Activated T-helper 2 cell treated with anti-CD3 and anti-CD28 coated beads, Interferon-gamma antibody, Interleukin-2, Interleukin-4, amounts not matched to agents 10 μg/mL and 5 μg/mL and 100 μg/mL, durations not matched to agents 14 hours and 24 hours and 36 hours (primary cell): ENCODE measurements at regions of chr19 and their contacts with region 1.

Region 1: GRCh38 chr19:54209811-54210494 is 9.3 kb downstream of the RPS9 start:
- DNase-seq: no peak
- H3K4me3 Mint-ChIP-seq: peak overlapping the region; percentile 30
- H3K27ac Mint-ChIP-seq: peak overlapping the region; percentile 71
- H3K4me1 Mint-ChIP-seq: peaks cover 59% of the 10 kb centered on the region
- H3K27me3 Mint-ChIP-seq: no peaks in the 10 kb centered on the region

Region 2: DNA sequence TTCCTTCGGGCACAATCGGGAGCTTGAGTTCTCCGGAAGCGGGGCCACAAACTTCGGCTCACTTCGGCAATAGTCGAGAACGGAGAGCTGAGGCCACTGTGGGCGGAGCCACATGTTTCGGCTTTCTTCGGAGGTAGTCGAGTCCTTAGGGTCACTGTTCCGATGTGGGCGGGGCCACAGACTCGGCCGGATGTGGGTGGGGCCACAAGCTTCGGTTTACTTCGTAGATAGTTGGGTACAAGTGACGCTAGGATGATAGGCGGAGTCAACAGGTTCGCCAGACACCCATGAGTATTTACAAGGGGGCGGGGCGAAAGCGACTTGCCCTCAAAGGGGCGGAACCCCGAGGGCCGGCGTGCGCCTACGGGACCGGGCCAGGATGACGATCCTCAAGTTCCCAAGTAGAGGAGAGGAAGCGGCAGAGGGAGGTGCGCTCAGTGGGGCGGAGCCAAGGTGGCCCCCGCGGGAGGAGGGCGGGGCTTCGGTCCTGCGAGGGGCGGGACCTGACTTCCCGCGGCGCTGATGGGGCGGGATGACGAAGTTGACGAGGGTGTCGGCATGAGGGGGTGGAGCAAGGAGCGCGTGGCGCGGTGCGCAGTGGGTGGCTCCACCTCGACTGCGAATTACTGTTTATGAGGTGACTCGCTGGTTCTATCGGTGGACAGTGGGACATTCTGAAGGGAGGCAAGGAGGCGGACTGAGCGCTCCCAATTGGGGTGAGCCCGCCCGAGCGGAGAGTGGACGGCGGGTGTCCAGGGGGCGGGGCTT is 20.0 kb before region 1 on chr19:
- intact Hi-C with region 1: loop called (anchors 1 kb)
- DNase-seq: peak; percentile 100
- H3K4me3 Mint-ChIP-seq: peak overlapping the region; percentile 89
- H3K27ac Mint-ChIP-seq: peak overlapping the region; percentile 98
- H3K4me1 Mint-ChIP-seq: peaks cover 26% of the 10 kb centered on the region
- H3K27me3 Mint-ChIP-seq: no peaks in the 10 kb centered on the region

Region 3: DNA sequence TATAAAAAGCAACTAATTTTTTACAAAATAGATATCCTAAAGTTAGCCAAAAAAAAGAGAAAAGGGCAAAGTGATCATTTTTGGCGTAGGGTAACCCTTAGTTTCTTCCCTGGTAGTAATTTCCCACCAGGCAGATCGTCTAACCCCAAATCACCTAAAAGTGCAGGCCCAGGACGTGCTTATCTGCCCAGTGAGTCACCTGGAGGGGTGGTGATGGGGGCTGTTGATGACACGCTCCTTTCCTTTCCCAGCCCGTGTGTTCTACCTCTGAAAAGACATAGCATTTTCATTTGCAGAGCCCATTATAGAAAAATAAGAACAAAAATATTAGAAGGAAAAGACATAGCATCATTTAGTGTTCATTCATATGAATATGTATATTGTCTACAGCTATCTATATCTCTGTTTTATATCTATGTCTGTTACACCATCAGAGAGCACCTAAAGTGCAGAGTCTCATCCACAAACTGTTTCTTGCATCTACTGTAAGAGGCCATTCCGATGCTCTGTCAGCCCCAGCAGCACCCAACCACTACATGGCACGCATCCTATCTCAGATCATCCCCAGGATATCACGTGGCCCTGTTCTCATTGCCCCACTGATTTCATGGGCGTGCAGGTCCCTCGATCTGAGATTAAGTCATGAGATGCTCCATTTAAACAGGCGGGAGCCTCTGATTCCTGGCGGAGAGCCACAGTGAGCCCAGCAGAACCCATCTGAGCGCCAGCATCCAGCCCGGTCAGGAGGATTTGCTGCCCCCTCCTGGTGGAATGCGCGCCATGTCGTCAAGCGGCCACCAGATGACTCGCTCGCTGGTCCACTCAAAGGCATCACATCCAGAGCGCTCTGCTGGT is 21.4 kb after region 1 on chr19:
- intact Hi-C with region 1: loop called (anchors 2 kb)
- DNase-seq: peak; percentile 76
- H3K4me3 Mint-ChIP-seq: no peak overlapping the region
- H3K27ac Mint-ChIP-seq: no peak overlapping the region
- H3K4me1 Mint-ChIP-seq: peaks cover 7% of the 10 kb centered on the region
- H3K27me3 Mint-ChIP-seq: peaks cover 30% of the 10 kb centered on the region

Region 4: DNA sequence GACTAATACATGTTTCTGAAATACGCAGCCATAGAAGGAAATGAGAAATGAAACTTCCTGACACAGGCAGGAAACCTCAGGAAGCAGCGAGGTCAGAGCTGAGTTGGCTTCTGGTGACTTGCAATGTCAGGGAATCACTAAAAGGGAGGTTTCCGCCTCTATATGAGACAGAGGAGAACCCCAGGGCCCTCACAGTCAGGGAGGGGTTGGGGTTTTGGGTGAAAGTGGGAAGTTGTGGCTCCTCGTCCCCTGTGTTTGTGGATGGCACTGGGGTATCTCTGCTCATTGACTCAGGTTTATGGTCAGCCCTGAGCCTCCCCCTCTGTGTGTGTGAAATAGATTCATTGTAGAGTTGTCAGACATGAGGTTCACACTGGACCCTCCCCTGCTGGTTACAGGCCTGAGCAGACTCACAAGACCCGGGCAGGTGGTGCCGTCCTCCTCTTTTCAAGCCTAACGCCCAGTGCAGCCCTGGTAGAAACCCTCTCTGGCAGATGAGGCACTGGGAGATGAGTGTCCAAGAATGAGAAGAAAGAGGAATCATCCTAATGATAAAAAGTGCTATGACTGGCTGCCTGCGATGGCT is 38.2 kb after region 1 on chr19:
- intact Hi-C with region 1: loop called (anchors 5 kb)
- DNase-seq: no peak
- H3K4me3 Mint-ChIP-seq: no peak overlapping the region
- H3K27ac Mint-ChIP-seq: no peak overlapping the region
- H3K4me1 Mint-ChIP-seq: peaks cover 12% of the 10 kb centered on the region
- H3K27me3 Mint-ChIP-seq: peaks cover 9% of the 10 kb centered on the region

Region 5: GRCh38 chr19:54364775-54365257 is 154.9 kb after region 1 on chr19 and contains the start of gene LAIR1:
- intact Hi-C with region 1: no loop called
- DNase-seq: peak; percentile 29
- H3K4me3 Mint-ChIP-seq: peak within 1 kb of the TSS; percentile 83
- H3K27ac Mint-ChIP-seq: peak within 1 kb of the TSS; percentile 69
- H3K4me1 Mint-ChIP-seq: peaks cover 52% of the 10 kb centered on the region
- H3K27me3 Mint-ChIP-seq: peaks cover 17% of the 10 kb centered on the region
- total RNA-seq, gene LAIR1: 8.8 and 10.8 TPM in 2 replicates

Region 6: DNA sequence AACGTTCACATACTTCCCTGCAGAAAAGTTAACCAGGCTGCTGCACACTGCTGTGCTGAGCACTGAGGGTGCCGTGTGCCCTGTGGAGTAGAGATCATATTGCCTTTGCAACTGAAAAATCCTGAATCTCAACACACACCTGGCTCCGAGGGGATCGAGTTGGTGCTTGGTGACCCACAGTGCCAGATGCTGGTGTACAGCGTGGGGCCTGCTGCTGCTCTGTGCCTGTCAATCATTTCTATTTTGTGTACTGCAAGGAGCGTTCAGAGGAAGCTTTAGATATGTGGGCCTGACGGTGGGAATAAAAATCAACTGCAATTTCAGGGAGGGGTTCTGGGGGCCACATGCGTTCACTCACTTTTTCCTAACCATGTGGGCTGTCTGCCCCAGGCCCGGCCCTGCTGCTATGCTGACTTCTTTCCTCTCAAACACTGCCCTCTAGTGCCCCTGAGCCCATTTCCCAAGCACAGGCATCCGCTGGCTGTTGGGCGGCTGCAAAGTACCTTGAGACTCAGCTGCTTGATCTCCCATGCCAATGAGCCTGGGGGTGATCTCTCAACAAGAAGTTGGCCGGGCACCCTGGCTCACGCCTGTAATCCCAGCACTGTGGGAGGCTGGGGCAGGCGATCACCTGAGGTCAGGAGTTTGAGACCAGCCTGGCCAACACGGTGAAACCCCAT is 229.4 kb after region 1 on chr19:
- intact Hi-C with region 1: no loop called
- DNase-seq: no peak
- H3K4me3 Mint-ChIP-seq: no peak overlapping the region
- H3K27ac Mint-ChIP-seq: no peak overlapping the region
- H3K4me1 Mint-ChIP-seq: peaks cover 8% of the 10 kb centered on the region
- H3K27me3 Mint-ChIP-seq: no peaks in the 10 kb centered on the region